Activated T-helper 1 cell treated with anti-CD3 and anti-CD28 coated beads, Interleukin-12 subunit alpha, Interleukin-12 subunit beta, Interleukin-2, Interleukin-4 antibody, amounts not matched to agents 30 ng/mL and 10 ng/mL and 1 ng/mL, durations not matched to agents 14 hours and 24 hours and 36 hours (primary cell): ENCODE measurements at regions of chr4 and their contacts with region 1.

Region 1: GRCh38 chr4:109702950-109703663 is at the start of gene CASP6:
- DNase-seq: peak; percentile 68
- H3K4me3 Mint-ChIP-seq: peak within 1 kb of the TSS; percentile 85
- H3K27ac Mint-ChIP-seq: peak within 1 kb of the TSS; percentile 93
- H3K4me1 Mint-ChIP-seq: peaks cover 45% of the 10 kb centered on the region
- H3K27me3 Mint-ChIP-seq: no peaks in the 10 kb centered on the region
- total RNA-seq, gene CASP6: 29.5 and 32.9 TPM in 2 replicates

Region 2: GRCh38 chr4:109424093-109424841 is 278.8 kb before region 1 on chr4:
- intact Hi-C with region 1: loop called (anchors 1 kb)
- DNase-seq: no peak
- H3K4me3 Mint-ChIP-seq: no peak overlapping the region
- H3K27ac Mint-ChIP-seq: no peak overlapping the region
- H3K4me1 Mint-ChIP-seq: peaks cover 9% of the 10 kb centered on the region
- H3K27me3 Mint-ChIP-seq: peaks cover 9% of the 10 kb centered on the region

Region 3: GRCh38 chr4:109494563-109494962 is 208.5 kb before region 1 on chr4:
- intact Hi-C with region 1: no loop called
- DNase-seq: no peak
- H3K4me3 Mint-ChIP-seq: no peak overlapping the region
- H3K27ac Mint-ChIP-seq: no peak overlapping the region
- H3K4me1 Mint-ChIP-seq: no peaks in the 10 kb centered on the region
- H3K27me3 Mint-ChIP-seq: no peaks in the 10 kb centered on the region

Region 4: DNA sequence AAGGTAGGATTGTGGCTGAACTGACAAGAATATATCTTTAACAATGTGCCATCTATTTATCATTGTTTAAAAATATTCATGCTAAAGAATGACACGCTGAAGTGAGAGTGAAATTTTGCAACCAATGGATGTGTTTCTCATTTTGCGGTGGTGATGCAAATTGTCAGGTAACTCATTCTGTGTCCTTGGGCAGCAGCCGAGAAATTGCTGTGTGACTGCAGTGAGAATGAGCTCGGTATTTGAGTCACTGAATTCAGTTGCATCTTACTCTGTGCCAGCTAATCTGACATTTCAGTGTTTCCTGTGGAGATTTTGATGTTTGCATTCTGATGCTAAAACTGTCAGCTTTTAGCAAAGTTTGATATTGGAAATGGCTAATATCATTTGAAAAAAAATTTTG is 114.9 kb before region 1 on chr4:
- intact Hi-C with region 1: loop called (anchors 1 kb)
- DNase-seq: peak; percentile 22
- H3K4me3 Mint-ChIP-seq: no peak overlapping the region
- H3K27ac Mint-ChIP-seq: peak overlapping the region; percentile 1
- H3K4me1 Mint-ChIP-seq: peaks cover 57% of the 10 kb centered on the region
- H3K27me3 Mint-ChIP-seq: no peaks in the 10 kb centered on the region

Region 5: DNA sequence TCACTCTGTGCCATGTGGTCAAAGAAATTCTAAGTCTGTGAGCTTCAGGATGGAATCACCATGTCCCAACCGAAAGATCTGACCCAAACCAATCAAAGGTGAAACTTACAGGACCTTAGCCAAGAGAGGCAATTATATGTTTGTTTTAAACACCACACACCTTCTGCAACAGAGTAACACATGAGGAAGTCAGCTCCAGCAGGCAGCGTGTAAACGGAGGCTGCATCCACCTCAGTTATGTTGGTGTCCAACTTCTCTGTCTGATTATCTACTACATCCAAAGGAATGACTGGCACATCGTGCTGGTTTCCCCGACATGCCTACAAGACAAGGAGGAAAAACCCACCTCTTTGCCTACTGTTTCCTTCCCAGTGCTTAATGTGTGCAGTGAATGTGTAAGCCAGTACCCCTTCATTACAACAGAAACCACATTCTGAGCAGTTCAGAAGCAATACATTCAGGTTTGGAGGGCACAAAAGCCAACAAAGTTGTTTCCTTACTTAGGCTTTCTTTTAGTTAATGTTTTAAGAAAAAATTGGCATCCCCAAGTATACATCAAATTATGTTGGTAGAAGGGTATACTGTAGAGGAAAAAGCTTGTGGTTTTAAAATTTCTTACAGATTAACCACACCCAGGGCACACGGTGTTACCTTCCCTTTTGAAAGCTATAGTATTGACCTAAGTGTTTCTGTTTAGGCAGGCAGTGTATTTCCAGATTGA is 12.3 kb before region 1 on chr4:
- intact Hi-C with region 1: loop called (anchors 1 kb)
- DNase-seq: no peak
- H3K4me3 Mint-ChIP-seq: peak overlapping the region; percentile 5
- H3K27ac Mint-ChIP-seq: peak overlapping the region; percentile 49
- H3K4me1 Mint-ChIP-seq: peaks cover 26% of the 10 kb centered on the region
- H3K27me3 Mint-ChIP-seq: no peaks in the 10 kb centered on the region

Region 6: GRCh38 chr4:109826719-109827118 is 123.6 kb after region 1 on chr4:
- intact Hi-C with region 1: loop called (anchors 2 kb)
- DNase-seq: no peak
- H3K4me3 Mint-ChIP-seq: no peak overlapping the region
- H3K27ac Mint-ChIP-seq: no peak overlapping the region
- H3K4me1 Mint-ChIP-seq: peaks cover 10% of the 10 kb centered on the region
- H3K27me3 Mint-ChIP-seq: no peaks in the 10 kb centered on the region